HepG2 (cell line): ENCODE measurements at regions of chr20 and their contacts with region 1.

Region 1: DNA sequence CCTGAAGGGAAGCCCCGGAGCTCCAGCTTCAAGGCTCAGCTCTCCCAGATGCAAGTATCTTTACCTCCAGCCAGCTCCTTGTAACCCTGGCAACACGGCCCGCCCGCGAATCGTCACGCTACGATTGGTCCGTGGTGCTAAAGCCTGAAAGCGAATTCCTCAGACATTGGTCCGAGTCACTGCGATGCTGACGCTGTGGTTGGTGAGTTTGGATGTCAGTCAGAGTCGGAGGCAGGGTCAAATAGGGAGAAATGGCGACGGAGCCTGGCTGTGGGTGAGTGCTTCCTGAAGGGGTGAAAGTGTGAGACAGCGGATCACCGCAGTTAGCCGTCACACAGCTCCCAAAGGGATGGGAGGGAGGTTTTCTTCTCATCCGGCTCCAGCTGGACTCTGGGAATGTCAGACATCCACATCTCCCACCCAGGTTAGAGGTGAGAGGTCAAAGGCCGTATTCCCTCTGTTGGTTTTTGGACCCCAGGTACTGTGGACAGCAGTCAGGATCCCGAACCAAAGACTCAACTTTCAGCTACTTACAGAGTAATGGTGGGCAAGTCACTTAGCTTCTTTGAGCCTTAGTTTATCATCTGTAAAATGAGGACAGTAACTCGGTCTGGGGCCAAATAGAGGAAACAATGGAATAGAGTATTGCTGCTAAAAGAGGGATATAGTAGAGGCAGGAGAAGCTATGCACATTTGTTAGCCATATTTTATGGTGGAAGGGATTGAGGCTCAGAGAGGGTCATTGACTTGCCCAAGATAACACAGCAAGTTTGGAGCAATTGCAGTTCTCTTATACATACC is at the start of gene ZSWIM1:
- DNase-seq: peak; percentile 100
- ATAC-seq: peak; percentile 98
- H3K4me3 ChIP-seq: peak within 1 kb of the TSS; percentile 83 to 92 (median 89)
- H3K27ac ChIP-seq: peak within 1 kb of the TSS; percentile 75
- H3K4me1 ChIP-seq: peaks cover 22% of the 10 kb centered on the region
- H3K27me3 ChIP-seq: no peaks in the 10 kb centered on the region; a peak in 1 of 5 replicates
- CTCF ChIP-seq: no peak
- EP300 ChIP-seq: no peak; a peak in 1 of 4 replicates
- POLR2A ChIP-seq: peak; percentile 97 to 99
- RAD21 ChIP-seq: peak; percentile 34; the same call in 1 of the 2 replicates
- total RNA-seq, gene ZSWIM1: 11.7 and 16.5 TPM in 2 replicates

Region 2: DNA sequence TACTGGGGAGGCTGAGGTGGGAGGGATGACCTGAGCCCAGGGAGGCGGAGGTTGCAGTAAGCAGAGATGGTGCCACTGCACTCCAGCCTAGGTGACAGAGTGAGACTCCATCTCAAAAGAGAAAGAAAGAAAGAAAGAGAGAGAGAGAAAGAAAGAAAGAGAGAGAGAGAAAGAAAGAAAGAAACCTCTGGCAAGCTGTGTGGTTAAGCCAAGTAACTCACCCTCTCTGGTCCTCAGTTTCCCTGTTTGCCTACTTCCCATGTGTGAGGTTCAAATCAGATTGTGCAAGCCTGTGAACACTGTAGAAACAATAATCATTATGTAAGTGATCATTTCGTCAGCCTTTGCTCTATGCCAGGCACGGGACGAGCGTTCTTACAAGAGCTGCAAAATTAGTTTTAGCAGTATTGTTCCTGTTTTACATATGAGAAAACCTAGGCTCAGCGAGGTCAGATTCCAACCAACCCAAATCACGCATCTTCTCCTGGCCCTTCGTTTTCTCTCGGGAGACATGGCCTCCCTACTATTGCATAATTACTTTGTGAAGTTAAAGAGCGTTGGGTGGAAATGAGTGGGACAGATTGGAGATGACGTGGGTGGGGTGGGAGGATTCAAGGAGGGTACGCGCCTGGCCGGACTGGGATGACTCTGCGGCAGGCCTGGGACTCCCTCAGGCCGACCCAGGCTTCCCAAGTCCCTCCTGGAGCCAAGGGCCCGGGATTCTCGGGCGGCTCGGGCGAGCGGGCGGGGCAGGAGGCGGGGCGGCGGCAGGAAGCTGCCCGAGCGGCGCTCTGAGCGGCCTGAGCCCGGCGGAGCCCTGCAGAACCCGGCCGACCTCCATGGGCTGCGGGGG is 47.9 kb before region 1 on chr20 and contains the start of gene SNX21:
- CTCF ChIA-PET with region 1: no interaction called
- POLR2A ChIA-PET with region 1: interaction called, 17 read pairs
- in situ Hi-C with region 1: no loop called
- intact Hi-C with region 1: loop called (anchors 5 kb)
- DNase-seq: peak; percentile 84
- ATAC-seq: peak; percentile 92
- H3K4me3 ChIP-seq: peak within 1 kb of the TSS; percentile 71 to 87 (median 86)
- H3K27ac ChIP-seq: peak within 1 kb of the TSS; percentile 69
- H3K4me1 ChIP-seq: peaks cover 67% of the 10 kb centered on the region
- H3K27me3 ChIP-seq: no peaks in the 10 kb centered on the region
- CTCF ChIP-seq: no peak; the same call in 1 of the 2 replicates
- EP300 ChIP-seq: no peak; a peak in 1 of 4 replicates
- POLR2A ChIP-seq: peak; percentile 83 to 89; a peak in 3 of 4 replicates
- RAD21 ChIP-seq: no peak
- total RNA-seq, gene SNX21: 9.3 and 12.8 TPM in 2 replicates

Region 3: GRCh38 chr20:45867819-45868176 is 13.4 kb before region 1 on chr20:
- CTCF ChIA-PET with region 1: no interaction called
- POLR2A ChIA-PET with region 1: interaction called, 53 read pairs
- in situ Hi-C with region 1: no loop called
- intact Hi-C with region 1: no loop called
- DNase-seq: no peak
- ATAC-seq: no peak
- H3K4me3 ChIP-seq: no peak overlapping the region
- H3K27ac ChIP-seq: peak overlapping the region; percentile 24
- H3K4me1 ChIP-seq: peaks cover 67% of the 10 kb centered on the region
- H3K27me3 ChIP-seq: no peaks in the 10 kb centered on the region
- CTCF ChIP-seq: no peak
- EP300 ChIP-seq: no peak
- POLR2A ChIP-seq: no peak
- RAD21 ChIP-seq: no peak

Region 4: GRCh38 chr20:45905505-45906079 is 24.4 kb after region 1 on chr20:
- CTCF ChIA-PET with region 1: no interaction called
- POLR2A ChIA-PET with region 1: interaction called, 27 read pairs
- in situ Hi-C with region 1: no loop called
- intact Hi-C with region 1: no loop called
- DNase-seq: peak; percentile 87
- ATAC-seq: peak; percentile 67
- H3K4me3 ChIP-seq: no peak overlapping the region
- H3K27ac ChIP-seq: peak overlapping the region; percentile 21
- H3K4me1 ChIP-seq: peaks cover 50% of the 10 kb centered on the region
- H3K27me3 ChIP-seq: no peaks in the 10 kb centered on the region
- CTCF ChIP-seq: no peak
- EP300 ChIP-seq: no peak
- POLR2A ChIP-seq: peak in 1 of 2 experiments; percentile 59; a peak in 2 of 4 replicates
- RAD21 ChIP-seq: no peak

Region 5: GRCh38 chr20:45924391-45925261 is 43.4 kb after region 1 on chr20:
- CTCF ChIA-PET with region 1: no interaction called
- POLR2A ChIA-PET with region 1: interaction called, 20 read pairs
- in situ Hi-C with region 1: no loop called
- intact Hi-C with region 1: no loop called
- DNase-seq: peak; percentile 66
- ATAC-seq: peak; percentile 15
- H3K4me3 ChIP-seq: peak overlapping the region in 2 of 3 experiments; percentile 20 to 52; a peak in 2 of 6 replicates
- H3K27ac ChIP-seq: no peak overlapping the region
- H3K4me1 ChIP-seq: peaks cover 84% of the 10 kb centered on the region
- H3K27me3 ChIP-seq: no peaks in the 10 kb centered on the region; a peak in 1 of 5 replicates
- CTCF ChIP-seq: no peak
- EP300 ChIP-seq: no peak
- POLR2A ChIP-seq: no peak
- RAD21 ChIP-seq: peak; percentile 25; the same call in 1 of the 2 replicates

Region 6: DNA sequence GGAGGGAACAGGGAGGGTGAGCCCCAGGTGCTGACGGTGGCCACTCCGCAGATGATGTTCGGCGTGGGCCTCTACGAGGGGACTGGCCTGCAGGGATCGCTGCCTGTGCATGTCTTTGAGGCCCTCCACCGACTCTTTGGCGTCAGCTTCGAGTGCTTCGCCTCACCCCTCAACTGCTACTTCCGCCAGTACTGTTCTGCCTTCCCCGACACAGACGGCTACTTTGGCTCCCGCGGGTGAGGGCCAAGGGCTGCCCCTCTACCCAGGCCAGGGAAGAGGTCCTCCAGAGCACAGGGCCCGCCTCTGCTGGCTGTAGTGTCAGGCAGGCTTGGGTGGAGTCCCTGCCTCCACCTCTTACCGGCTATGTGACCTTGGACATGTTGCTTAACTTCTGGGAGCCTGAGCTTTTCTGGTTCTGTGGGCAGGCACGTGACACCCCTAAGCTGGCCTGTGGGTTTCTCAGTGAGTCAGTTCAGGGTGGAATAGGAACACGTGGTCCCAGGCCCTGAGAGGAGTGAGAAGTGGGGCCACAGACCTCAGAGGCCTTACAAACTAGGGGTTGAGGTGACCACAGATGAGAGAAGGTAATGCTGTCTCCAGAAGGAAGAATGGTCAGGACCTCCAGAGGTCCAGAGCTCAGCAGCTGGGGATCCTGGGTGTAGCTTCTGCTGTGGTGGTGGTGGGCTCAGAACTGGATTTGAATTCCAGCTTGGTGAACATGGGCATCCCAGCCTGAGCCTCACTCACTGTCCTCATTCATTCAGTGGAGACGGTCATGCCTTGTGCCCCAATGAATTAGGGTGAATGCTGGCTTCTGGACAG is 65.2 kb after region 1 on chr20:
- CTCF ChIA-PET with region 1: no interaction called
- POLR2A ChIA-PET with region 1: interaction called, 24 read pairs
- in situ Hi-C with region 1: no loop called
- intact Hi-C with region 1: no loop called
- DNase-seq: peak; percentile 97
- ATAC-seq: peak; percentile 83
- H3K4me3 ChIP-seq: no peak overlapping the region
- H3K27ac ChIP-seq: peak overlapping the region; percentile 65
- H3K4me1 ChIP-seq: peaks cover 30% of the 10 kb centered on the region
- H3K27me3 ChIP-seq: no peaks in the 10 kb centered on the region
- CTCF ChIP-seq: peak; percentile 46
- EP300 ChIP-seq: peak; percentile 64 to 80; a peak in 3 of 4 replicates
- POLR2A ChIP-seq: peak; percentile 2 to 37; a peak in 2 of 4 replicates
- RAD21 ChIP-seq: peak; percentile 12; the same call in 1 of the 2 replicates

Region 7: GRCh38 chr20:46562373-46563169 is 681.4 kb after region 1 on chr20:
- CTCF ChIA-PET with region 1: no interaction called
- POLR2A ChIA-PET with region 1: no interaction called
- in situ Hi-C with region 1: no loop called
- intact Hi-C with region 1: no loop called
- DNase-seq: peak; percentile 87
- ATAC-seq: peak; percentile 74
- H3K4me3 ChIP-seq: peak overlapping the region; percentile 24 to 58 (median 29); a peak in 5 of 6 replicates
- H3K27ac ChIP-seq: peak overlapping the region; percentile 55
- H3K4me1 ChIP-seq: peaks cover 72% of the 10 kb centered on the region
- H3K27me3 ChIP-seq: no peaks in the 10 kb centered on the region
- CTCF ChIP-seq: peak; percentile 93
- EP300 ChIP-seq: peak; percentile 41 to 46; a peak in 2 of 4 replicates
- POLR2A ChIP-seq: no peak; a peak in 1 of 4 replicates
- RAD21 ChIP-seq: peak; percentile 65; the same call in 1 of the 2 replicates